ENCODE measurements at regions of chr1 and their contacts with region 1.

Region 1: GRCh38 chr1:206982216-206982615 is 12.0 kb upstream of the FCAMR start:
- DNase-seq: peak; percentile 62
- H3K4me3 ChIP-seq: no peak overlapping the region
- H3K27ac ChIP-seq: no peak overlapping the region
- H3K4me1 ChIP-seq: no peaks in the 10 kb centered on the region
- CTCF ChIP-seq: peak; percentile 83

Region 2: GRCh38 chr1:206612129-206612876 is 369.9 kb before region 1 on chr1 and contains the start of gene EIF2D:
- CTCF ChIA-PET with region 1: no interaction called
- POLR2A ChIA-PET with region 1: no interaction called
- intact Hi-C with region 1: loop called (anchors 1 kb)
- DNase-seq: peak; percentile 96
- H3K4me3 ChIP-seq: peak within 1 kb of the TSS; percentile 72
- H3K27ac ChIP-seq: peak within 1 kb of the TSS; percentile 27
- H3K4me1 ChIP-seq: peaks cover 13% of the 10 kb centered on the region
- CTCF ChIP-seq: peak; percentile 82
- total RNA-seq, gene EIF2D: 85.4 and 89.3 TPM in 2 replicates

Region 3: GRCh38 chr1:206734499-206735142 is 247.6 kb before region 1 on chr1:
- CTCF ChIA-PET with region 1: interaction called, 4 read pairs
- POLR2A ChIA-PET with region 1: no interaction called
- intact Hi-C with region 1: loop called (anchors 5 kb)
- DNase-seq: peak; percentile 67
- H3K4me3 ChIP-seq: no peak overlapping the region
- H3K27ac ChIP-seq: no peak overlapping the region
- H3K4me1 ChIP-seq: peaks cover 17% of the 10 kb centered on the region
- CTCF ChIP-seq: peak; percentile 91

Region 4: DNA sequence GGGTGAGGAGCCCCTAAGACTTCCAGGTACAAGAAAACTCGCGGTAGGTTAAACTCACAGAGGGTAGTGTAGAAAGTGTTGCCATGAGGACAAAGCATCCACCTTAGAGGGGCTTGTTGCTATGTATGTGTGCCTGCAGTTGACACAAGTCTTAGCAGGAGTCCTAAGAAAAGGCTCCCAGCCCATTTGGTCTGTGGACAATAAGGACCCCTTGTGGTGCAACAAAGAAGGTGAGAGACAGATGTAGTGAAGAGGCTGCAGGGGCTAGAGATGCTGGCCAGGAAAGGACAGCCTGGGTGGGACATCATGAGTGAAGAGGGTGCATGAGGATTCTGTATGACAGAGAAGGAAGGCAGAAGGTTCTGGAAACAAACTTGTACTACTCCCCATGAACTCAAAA is 173.6 kb before region 1 on chr1:
- CTCF ChIA-PET with region 1: no interaction called
- POLR2A ChIA-PET with region 1: no interaction called
- intact Hi-C with region 1: loop called (anchors 2 kb)
- DNase-seq: peak; percentile 71
- H3K4me3 ChIP-seq: no peak overlapping the region
- H3K27ac ChIP-seq: no peak overlapping the region
- H3K4me1 ChIP-seq: peaks cover 1% of the 10 kb centered on the region
- CTCF ChIP-seq: peak; percentile 74

Region 5: GRCh38 chr1:206865013-206865671 is 117.1 kb before region 1 on chr1 and contains the start of gene IL20:
- CTCF ChIA-PET with region 1: no interaction called
- POLR2A ChIA-PET with region 1: interaction called, 4 read pairs
- intact Hi-C with region 1: loop called (anchors 5 kb)
- DNase-seq: peak; percentile 69
- H3K4me3 ChIP-seq: no peak within 1 kb of the TSS
- H3K27ac ChIP-seq: no peak within 1 kb of the TSS
- H3K4me1 ChIP-seq: no peaks in the 10 kb centered on the region
- CTCF ChIP-seq: peak; percentile 89
- total RNA-seq, gene IL20: not detected in 2 replicates

Region 6: DNA sequence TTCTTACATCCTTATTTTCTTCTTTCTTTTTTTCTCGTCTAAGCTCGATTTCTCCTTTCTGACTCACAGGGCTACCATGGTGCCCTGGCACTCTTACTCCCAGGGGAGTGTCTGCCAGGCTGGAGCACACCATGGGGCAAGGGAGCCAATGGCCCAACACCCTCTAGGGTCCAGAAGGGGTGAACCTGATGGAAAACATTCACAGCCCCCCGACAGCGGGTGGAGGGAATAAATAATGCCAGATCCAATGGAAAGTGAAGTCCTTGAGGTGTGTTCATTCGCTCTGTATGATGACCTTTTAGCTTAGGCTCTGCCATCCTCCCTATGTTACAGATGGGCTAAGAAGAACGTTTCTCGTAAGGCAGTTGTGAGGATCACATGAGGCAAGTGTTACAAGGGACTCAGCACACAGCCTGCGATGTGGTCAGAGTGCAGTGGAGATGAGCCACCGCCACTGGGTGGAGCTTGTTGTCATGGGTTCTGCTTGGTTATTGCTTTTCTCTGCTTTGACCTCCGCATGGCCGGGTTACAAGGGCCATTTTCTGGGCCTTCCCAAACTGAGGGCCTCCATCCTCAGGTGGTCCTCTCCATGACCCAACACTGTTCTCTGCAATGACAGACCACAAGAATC is 57.0 kb before region 1 on chr1:
- CTCF ChIA-PET with region 1: no interaction called
- POLR2A ChIA-PET with region 1: no interaction called
- intact Hi-C with region 1: loop called (anchors 5 kb)
- DNase-seq: peak; percentile 89
- H3K4me3 ChIP-seq: no peak overlapping the region
- H3K27ac ChIP-seq: peak overlapping the region; percentile 53
- H3K4me1 ChIP-seq: peaks cover 56% of the 10 kb centered on the region
- CTCF ChIP-seq: peak; percentile 64

Measured in OCI-LY7 (cell line).